ENCODE measurements at regions of chr7 and their contacts with region 1.

Region 1: DNA sequence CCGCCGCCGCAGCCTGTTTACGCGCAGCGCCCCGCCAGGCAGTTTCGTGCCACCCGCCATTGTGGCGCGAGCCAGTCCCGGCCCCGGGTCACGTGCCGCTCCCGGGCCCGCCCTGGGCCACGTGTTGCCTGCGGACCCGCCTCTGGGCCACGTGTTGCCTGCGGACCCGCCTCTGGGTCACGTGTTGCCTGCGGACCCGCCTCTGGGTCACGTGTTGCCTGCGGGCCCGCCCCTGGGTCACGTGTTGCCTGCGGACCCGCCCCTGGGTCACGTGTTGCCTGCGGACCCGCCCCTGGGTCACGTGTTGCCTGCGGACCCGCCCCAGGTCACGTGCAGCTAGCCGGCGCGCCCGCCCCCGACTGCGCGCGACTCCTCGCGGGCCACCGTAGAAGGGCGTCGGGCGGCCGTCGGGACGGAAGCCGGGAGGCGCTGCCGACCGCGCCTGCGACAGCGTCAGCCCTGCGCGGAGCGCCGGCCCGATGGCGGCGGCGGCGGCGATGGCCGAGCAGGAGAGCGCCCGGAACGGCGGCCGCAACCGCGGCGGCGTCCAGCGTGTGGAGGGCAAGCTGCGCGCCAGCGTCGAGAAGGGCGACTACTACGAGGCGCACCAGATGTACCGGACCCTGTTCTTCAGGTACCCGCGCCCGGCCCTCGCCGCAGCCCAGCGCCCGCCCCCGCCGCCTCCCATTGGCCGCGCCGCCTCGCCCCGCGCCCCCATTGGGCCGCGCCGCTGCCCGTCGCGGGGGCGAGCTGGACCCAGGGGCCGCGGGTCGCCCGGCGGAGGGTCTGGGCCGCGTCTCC is at the start of gene GET4:
- DNase-seq: peak; percentile 80
- ATAC-seq: peak; percentile 90
- H3K4me3 ChIP-seq: peak within 1 kb of the TSS; percentile 86
- H3K27ac ChIP-seq: peak within 1 kb of the TSS; percentile 59
- H3K4me1 ChIP-seq: no peaks in the 10 kb centered on the region; the same call in 1 of the 2 replicates
- H3K27me3 ChIP-seq: no peaks in the 10 kb centered on the region
- CTCF ChIP-seq: peak; percentile 17 to 29 (median 19); a peak in 3 of 6 replicates
- EP300 ChIP-seq: no peak; a peak in 1 of 4 replicates
- POLR2A ChIP-seq: peak; percentile 92
- RAD21 ChIP-seq: no peak
- polyA plus RNA-seq, gene GET4: 0.66 to 2.3 TPM

Region 2: GRCh38 chr7:150811-151221 is 725.6 kb before region 1 on chr7:
- CTCF ChIA-PET with region 1: no interaction called
- POLR2A ChIA-PET with region 1: no interaction called
- RAD21 ChIA-PET with region 1: no interaction called
- SMC1A ChIA-PET with region 1: no interaction called
- in situ Hi-C with region 1: no loop called
- intact Hi-C with region 1: no loop called
- DNase-seq: no peak
- ATAC-seq: no peak
- H3K4me3 ChIP-seq: no peak overlapping the region
- H3K27ac ChIP-seq: no peak overlapping the region
- H3K4me1 ChIP-seq: peaks cover 6% of the 10 kb centered on the region
- H3K27me3 ChIP-seq: no peaks in the 10 kb centered on the region
- CTCF ChIP-seq: no peak
- EP300 ChIP-seq: no peak
- POLR2A ChIP-seq: no peak
- RAD21 ChIP-seq: no peak

Region 3: DNA sequence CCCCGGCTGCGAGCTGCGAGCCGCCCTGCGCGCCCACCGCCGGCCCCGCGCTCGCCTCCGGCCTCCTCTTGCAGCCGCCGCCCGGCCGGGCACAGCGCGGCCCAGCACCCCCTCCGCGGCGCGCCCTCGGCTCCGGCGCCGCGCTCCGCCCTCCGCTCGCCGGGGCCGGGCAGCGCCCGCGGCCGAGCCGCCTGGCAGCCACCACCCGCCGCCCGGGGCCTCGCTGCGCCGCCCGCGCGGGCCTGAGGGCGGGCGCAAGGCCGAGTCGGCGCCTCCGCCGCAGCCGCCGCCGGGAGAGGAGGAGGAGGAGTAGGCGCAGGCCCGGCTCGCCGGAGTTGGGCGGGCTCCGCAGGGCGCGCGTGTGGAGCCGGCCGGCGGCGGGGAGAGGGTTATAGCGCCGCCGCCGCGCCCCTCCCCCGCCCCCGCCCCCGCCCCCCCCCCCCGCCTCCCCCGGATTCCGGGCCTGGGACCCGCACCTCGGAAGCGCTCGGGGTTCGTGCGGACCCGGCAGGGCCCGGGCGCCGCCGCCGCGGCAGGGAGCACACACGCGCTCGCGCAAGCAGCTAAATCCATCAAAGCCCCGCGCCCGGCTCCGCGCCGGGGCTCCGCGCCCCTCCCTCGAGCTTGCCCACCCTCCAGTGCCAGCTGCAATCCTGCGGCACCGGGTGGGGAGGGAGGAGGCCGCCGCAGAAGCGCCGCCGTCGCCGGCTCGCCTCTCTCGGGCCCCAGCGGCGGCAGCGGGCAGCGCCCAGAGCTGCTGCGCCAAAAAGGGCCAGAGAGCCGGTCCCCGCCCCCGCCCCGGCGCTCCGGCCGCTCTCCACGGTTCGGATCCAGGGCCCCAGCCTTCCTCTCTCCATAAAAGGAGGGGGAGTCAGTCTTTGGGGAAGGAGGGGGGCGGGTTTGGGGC is 356.6 kb before region 1 on chr7 and contains the start of gene PDGFA:
- CTCF ChIA-PET with region 1: no interaction called
- POLR2A ChIA-PET with region 1: no interaction called
- RAD21 ChIA-PET with region 1: no interaction called
- SMC1A ChIA-PET with region 1: no interaction called
- in situ Hi-C with region 1: no loop called
- intact Hi-C with region 1: loop called (anchors 10 kb)
- DNase-seq: no peak
- ATAC-seq: peak; percentile 57
- H3K4me3 ChIP-seq: peak within 1 kb of the TSS; percentile 64
- H3K27ac ChIP-seq: no peak within 1 kb of the TSS
- H3K4me1 ChIP-seq: peaks cover 16% of the 10 kb centered on the region
- H3K27me3 ChIP-seq: peaks cover 2 to 3% of the 10 kb centered on the region in 2 experiments
- CTCF ChIP-seq: no peak
- EP300 ChIP-seq: no peak
- POLR2A ChIP-seq: no peak
- RAD21 ChIP-seq: no peak
- polyA plus RNA-seq, gene PDGFA: 5.8 to 9.2 TPM

Region 4: GRCh38 chr7:786472-787255 is 89.7 kb before region 1 on chr7:
- CTCF ChIA-PET with region 1: interaction called, 79 read pairs
- POLR2A ChIA-PET with region 1: no interaction called
- RAD21 ChIA-PET with region 1: interaction called, 11 read pairs
- SMC1A ChIA-PET with region 1: interaction called, 18 read pairs
- in situ Hi-C with region 1: loop called (anchors 5 kb)
- intact Hi-C with region 1: loop called (anchors 1 kb)
- DNase-seq: no peak
- ATAC-seq: peak; percentile 95
- H3K4me3 ChIP-seq: no peak overlapping the region
- H3K27ac ChIP-seq: no peak overlapping the region
- H3K4me1 ChIP-seq: no peaks in the 10 kb centered on the region
- H3K27me3 ChIP-seq: no peaks in the 10 kb centered on the region
- CTCF ChIP-seq: peak; percentile 84 to 91 (median 89)
- EP300 ChIP-seq: no peak
- POLR2A ChIP-seq: no peak
- RAD21 ChIP-seq: peak; percentile 92

Region 5: DNA sequence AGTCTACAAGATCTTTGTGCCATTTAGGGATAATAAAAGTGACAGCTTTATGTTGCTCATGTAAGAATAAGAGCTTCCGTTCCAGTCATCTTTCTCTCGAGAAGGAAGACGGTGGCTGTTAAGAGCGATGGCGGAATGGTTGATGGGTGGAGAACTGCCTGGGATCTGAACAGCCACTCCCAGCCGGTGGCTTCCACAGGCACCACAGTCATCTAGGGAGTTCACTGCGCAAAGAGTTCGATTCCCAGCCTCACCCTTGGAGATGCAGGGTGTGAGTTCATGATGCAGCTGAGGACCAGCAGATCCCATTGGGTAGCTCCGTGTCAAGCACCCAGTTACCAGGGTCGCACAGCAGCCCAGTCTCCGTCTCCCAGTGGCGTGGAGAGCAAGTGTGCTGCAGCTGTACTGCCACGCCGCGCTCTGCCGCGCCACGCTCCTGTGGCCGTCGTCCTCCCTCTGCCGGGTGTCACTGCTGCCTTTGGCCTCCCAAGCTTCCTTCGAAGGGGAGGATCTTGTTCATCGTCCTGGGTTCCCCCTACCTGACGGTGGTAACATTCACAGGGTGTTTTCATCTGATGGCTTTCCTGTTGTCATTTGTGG is 36.3 kb before region 1 on chr7:
- CTCF ChIA-PET with region 1: interaction called, 10 read pairs
- POLR2A ChIA-PET with region 1: no interaction called
- RAD21 ChIA-PET with region 1: no interaction called
- SMC1A ChIA-PET with region 1: interaction called, 7 read pairs
- in situ Hi-C with region 1: no loop called
- intact Hi-C with region 1: no loop called
- DNase-seq: no peak
- ATAC-seq: no peak
- H3K4me3 ChIP-seq: no peak overlapping the region
- H3K27ac ChIP-seq: no peak overlapping the region
- H3K4me1 ChIP-seq: no peaks in the 10 kb centered on the region; the same call in 1 of the 2 replicates
- H3K27me3 ChIP-seq: no peaks in the 10 kb centered on the region
- CTCF ChIP-seq: no peak
- EP300 ChIP-seq: no peak
- POLR2A ChIP-seq: no peak
- RAD21 ChIP-seq: no peak